Activated T-helper 1 cell treated with anti-CD3 and anti-CD28 coated beads, Interleukin-12 subunit alpha, Interleukin-12 subunit beta, Interleukin-2, Interleukin-4 antibody, amounts not matched to agents 30 ng/mL and 10 ng/mL and 1 ng/mL, durations not matched to agents 14 hours and 24 hours and 36 hours (primary cell): ENCODE measurements at regions of chr9 and their contacts with region 1.

Region 1: DNA sequence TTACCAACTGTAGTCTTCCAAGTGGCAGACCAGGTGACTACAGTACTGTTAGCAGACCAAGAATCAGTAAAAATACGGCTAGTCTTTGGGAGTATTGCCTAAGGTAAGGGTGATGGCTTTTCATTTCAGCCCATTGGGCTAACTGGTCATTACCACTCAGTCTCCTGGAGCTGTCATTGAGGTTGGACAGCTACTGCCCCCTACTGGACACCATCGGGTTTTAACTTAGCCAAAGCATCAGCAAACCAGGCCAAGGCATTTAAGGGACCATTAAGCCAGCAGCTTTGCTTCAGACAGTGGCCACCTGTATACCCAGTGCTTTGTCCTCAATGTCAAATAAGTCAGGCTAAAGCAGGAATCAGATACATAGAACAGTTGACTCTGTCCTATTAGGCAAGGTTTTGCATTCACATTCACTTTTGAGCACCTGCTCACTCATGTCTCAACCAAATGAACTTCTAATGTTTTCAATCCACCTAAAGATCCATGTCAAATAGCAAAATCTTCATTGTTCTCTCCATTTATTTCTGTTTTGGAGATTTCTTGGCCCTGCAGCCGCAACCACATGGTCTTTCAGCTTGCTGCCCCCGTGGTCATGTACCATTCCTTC is 117.2 kb downstream of the INVS start:
- DNase-seq: peak; percentile 46
- H3K4me3 Mint-ChIP-seq: no peak overlapping the region
- H3K27ac Mint-ChIP-seq: no peak overlapping the region
- H3K4me1 Mint-ChIP-seq: peaks cover 12% of the 10 kb centered on the region
- H3K27me3 Mint-ChIP-seq: no peaks in the 10 kb centered on the region

Region 2: DNA sequence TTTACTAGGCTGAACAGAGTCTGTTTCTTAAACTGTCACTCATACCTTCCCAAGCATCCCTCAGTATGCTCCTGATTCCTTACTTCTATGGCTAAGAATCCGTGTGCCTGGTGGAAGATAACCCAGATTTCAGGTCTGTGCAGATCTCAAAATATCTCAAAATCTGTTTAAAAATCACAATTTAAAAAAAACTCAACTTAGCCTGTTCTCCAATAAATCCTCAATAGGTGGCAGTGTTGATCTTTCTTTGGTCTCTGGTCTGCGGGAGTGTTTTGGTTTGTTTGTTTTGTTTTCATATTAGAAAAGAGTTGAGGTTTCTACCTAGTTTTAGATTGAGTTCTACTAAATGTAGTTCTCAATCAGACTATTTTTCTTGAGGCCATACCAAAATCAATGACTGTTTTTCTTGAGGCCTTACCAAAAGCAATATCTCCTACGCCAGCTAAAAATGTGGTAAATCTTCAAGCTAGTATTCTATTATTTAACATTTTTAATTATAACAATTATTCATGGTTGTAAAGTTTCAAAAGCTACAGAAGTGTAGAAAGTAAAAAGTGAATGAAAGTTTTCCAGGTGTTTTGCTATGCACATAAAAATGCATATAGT is 1053.4 kb before region 1 on chr9:
- intact Hi-C with region 1: loop called (anchors 2 kb)
- DNase-seq: no peak
- H3K4me3 Mint-ChIP-seq: no peak overlapping the region
- H3K27ac Mint-ChIP-seq: no peak overlapping the region
- H3K4me1 Mint-ChIP-seq: peaks cover 25% of the 10 kb centered on the region
- H3K27me3 Mint-ChIP-seq: peaks cover 9% of the 10 kb centered on the region

Region 3: GRCh38 chr9:99807276-99807852 is 408.9 kb before region 1 on chr9:
- intact Hi-C with region 1: loop called (anchors 5 kb)
- DNase-seq: peak; percentile 43
- H3K4me3 Mint-ChIP-seq: no peak overlapping the region
- H3K27ac Mint-ChIP-seq: no peak overlapping the region
- H3K4me1 Mint-ChIP-seq: peaks cover 37% of the 10 kb centered on the region
- H3K27me3 Mint-ChIP-seq: peaks cover 26% of the 10 kb centered on the region

Region 4: DNA sequence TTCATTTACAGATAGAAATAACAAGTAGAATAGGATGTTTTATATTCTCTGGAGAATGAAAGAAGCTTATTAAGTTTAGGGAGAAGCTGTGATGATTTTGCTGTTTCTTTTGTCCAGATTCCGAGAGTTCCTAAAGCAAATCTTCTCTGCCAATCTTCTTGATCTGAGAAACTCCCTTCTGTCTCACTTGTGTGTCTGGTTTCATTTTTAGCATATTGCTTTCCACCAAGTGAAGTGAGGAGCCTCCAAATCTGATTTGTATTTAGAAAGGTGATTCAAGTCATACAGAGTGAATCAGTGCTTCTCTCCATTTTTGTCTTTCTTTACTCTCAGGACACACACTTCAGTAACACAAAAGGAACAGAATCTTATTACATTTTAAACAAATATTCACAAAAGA is 261.5 kb before region 1 on chr9:
- intact Hi-C with region 1: loop called (anchors 10 kb)
- DNase-seq: no peak
- H3K4me3 Mint-ChIP-seq: no peak overlapping the region
- H3K27ac Mint-ChIP-seq: peak overlapping the region; percentile 8
- H3K4me1 Mint-ChIP-seq: peaks cover 14% of the 10 kb centered on the region
- H3K27me3 Mint-ChIP-seq: no peaks in the 10 kb centered on the region

Region 5: DNA sequence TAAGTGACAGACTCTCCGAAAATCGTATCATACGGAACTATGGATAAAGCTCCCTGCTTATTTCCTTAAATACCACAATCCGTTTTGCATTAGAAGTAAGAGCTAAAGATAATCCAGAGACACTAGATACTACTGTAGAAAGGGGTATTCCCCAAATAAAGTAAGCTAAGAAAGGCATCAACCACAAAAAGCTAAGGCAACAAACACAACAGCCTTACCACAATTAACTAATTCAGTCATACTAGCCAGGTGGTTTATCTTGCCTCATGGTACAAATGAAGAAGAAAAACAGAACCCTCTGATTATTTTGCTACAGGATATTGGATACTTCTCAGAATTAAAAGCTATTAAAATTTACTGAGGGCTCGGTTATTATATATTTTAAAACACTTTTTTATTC is 131.5 kb before region 1 on chr9:
- intact Hi-C with region 1: loop called (anchors 1 kb)
- DNase-seq: no peak
- H3K4me3 Mint-ChIP-seq: peak overlapping the region; percentile 23
- H3K27ac Mint-ChIP-seq: no peak overlapping the region
- H3K4me1 Mint-ChIP-seq: peaks cover 64% of the 10 kb centered on the region
- H3K27me3 Mint-ChIP-seq: peaks cover 2% of the 10 kb centered on the region